ENCODE measurements at regions of chr5 and their contacts with region 1.

Region 1: DNA sequence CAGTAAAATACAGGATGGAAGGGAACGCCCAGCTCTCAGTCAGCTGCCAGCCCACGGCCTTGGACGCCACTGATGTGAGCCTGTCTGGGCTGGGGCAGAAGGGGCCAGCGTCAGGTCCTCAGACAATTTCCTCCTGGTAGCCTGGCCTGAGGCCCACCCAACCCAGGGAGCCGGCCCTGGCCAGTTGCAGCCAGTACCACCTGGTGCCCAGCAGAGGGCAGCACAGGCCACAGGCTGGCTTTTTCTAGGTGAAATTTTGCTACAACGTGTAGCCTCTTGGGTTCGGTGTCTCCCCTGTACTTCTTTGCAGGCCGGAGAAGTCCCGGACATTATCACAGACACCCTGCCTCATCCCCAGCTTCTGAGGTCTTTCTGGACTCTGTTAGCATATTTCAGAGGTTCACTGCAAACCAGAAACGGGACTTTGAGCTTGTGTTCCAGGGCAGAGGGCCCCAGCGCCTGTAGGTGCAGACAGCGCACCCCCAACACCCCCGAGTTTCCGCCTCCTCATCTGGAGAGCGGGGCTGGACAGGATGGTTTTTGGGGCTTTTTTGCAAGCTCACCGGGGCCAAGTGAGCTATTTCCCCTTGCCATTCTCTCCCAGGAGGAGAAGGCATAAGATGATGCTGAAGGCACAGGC is 45.9 kb upstream of the KCNMB1 start:
- DNase-seq: peak; percentile 36
- H3K4me3 Mint-ChIP-seq: no peak overlapping the region
- H3K27ac Mint-ChIP-seq: no peak overlapping the region
- H3K4me1 Mint-ChIP-seq: no peaks in the 10 kb centered on the region
- H3K27me3 Mint-ChIP-seq: peaks cover 9% of the 10 kb centered on the region

Region 2: DNA sequence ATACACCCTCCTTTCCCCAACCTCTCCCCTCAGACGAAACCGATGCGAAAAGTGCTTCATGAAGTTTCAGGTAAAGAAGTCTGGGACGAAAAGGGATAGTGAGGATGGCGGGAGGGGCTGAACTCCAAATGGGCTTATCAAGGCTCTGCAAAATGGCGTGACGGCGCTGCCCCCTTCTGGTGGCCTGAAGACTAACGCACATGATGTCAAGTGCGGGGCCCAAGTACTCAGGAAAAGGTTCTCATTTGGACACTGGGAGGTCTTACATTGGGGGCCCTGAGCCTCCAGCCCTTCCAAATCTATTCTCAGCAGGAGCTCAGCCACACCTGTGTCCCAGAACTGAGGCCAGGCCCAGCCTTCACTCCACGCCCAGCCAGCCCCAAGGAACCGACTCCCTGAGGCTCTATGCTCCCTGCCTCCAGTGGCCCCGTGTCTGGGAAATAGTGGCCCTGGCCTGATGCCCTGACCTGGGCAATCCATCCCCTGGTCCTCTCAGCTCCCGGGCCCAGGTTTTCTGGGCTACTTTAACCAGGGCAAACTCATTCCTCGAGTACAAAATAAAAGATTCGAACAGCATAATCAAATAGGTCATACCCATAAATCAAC is 188.6 kb after region 1 on chr5:
- intact Hi-C with region 1: loop called (anchors 1 kb)
- DNase-seq: no peak
- H3K4me3 Mint-ChIP-seq: no peak overlapping the region
- H3K27ac Mint-ChIP-seq: no peak overlapping the region
- H3K4me1 Mint-ChIP-seq: no peaks in the 10 kb centered on the region
- H3K27me3 Mint-ChIP-seq: peaks cover 2% of the 10 kb centered on the region

Region 3: DNA sequence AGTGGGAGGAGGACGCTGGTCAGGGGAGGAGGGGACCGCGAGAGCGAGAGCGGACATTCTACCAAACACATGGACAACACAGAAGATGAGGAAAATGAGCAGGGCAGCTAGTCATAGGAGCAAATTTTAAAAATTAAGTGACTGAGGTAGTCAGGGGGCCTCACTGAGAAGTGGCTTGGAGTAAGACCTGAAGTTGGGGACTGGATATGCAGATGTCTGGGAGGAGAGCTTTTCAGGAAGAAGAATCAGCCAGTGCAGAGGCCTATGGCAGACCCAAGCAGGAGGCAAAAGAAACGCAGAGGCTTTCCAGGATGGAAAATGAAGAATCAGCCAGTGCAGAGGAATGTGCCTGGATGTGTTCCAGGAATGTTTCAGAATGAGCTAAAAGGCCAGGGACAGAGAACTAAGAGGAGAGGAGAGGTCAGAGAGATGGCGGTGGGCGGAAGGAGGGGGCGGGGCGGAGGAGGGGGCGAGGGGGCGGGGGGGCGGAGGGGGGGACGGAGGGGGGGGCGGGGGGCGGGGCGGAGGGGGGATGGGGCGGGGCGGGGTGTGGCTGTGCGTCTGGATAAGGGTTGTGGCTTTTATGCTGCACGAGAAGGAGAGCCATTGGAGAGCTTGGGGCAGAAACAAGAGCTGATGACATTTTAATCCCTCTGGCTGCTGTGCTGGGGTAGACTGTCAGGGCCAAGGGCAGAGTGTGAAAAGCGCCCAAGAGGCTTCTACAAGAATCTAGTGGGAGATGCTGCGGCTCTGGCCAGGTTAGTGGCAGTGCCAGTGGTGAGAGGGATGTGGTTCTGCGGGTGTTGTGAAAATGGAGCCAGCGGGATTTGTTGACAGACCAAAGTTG is 198.4 kb after region 1 on chr5:
- intact Hi-C with region 1: loop called (anchors 1 kb)
- DNase-seq: no peak
- H3K4me3 Mint-ChIP-seq: peak overlapping the region; percentile 32
- H3K27ac Mint-ChIP-seq: peak overlapping the region; percentile 3
- H3K4me1 Mint-ChIP-seq: peaks cover 8% of the 10 kb centered on the region
- H3K27me3 Mint-ChIP-seq: peaks cover 13% of the 10 kb centered on the region